ENCODE measurements at regions of chr5 and their contacts with region 1.

Region 1: DNA sequence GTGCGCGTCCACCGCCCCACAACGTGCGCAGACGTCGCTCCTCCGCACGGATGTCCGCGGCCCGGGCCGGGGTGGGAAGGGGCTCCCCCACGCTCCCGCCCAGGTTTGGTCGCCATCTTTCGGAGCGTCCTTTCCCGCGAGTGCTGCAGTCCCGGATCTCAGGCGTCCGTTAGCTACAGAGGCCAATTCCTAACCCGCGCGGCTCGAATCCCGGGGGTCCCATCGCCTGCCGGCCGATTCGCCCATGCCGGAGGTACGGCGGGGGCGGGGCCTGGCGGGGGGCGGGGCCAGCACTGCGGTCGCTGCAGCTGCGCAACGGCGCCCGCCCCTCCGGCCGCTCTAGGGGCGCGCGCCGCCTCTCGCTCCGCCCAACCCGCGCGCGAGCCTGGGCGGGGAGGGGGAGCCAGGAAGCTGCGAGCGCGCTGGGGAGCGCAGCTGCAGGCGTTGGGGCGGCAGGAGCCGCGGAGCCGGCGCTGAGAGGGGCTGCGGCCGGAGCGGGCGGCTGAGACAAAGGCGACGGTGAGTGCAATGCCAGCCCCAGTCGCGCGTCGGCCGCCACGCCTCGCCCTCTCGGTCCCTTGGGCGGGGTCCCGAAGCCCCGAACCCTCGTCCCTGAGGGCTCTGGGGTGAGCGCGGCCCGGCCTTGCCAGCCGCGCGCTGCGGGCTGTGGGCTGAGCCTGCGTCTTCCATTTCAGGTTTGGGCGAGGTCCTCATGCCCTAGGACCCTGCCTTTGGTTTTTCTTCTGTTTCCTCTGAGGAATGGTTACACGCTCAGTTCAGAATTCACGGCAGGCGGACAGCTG is at the start of gene CDC42SE2:
- DNase-seq: peak; percentile 92
- H3K4me3 Mint-ChIP-seq: peak within 1 kb of the TSS; percentile 81
- H3K27ac Mint-ChIP-seq: peak within 1 kb of the TSS; percentile 88
- H3K4me1 Mint-ChIP-seq: peaks cover 11% of the 10 kb centered on the region
- H3K27me3 Mint-ChIP-seq: no peaks in the 10 kb centered on the region
- CTCF ChIP-seq: peak; percentile 7
- total RNA-seq, gene CDC42SE2: 63.9 and 65.5 TPM in 2 replicates

Region 2: DNA sequence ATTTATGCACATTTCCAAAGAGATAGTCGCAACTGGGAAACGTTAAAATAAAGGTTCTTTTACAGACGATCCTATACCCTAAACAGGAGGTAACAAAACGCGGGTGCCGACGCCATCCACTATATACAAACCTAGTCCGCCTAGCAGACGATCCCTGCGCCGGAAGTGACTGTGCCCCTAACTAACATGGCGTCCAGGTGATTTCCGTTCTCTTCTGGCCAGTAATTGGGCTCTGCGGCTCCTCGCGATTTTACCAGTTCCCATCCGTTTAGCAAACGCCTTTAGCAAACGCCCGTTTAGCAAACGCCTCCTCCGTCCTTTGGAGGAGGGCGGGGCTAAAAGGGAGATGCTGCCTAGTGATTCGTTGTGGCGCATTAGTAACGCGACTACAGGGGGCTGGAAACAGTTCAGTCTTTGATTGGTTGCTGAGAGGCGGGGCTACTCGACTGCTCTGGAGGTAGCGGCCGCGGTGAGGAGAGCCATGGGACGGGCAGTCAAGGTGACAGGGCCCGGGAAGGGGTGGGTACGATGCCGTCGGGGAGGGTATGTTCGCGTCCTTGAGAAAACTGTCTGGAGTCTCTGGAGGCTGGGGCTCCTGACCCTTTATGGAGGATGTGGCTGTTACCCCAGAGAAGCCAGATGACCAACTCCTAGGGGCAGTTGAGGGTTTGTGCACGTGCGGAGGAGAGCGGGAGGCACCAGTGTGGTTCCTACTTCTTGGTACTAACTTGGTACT is 93.1 kb before region 1 on chr5 and contains the start of gene LYRM7:
- CTCF ChIA-PET with region 1: interaction called, 9 read pairs
- intact Hi-C with region 1: loop called (anchors 1 kb)
- DNase-seq: peak; percentile 97
- H3K4me3 Mint-ChIP-seq: peak within 1 kb of the TSS; percentile 92
- H3K27ac Mint-ChIP-seq: peak within 1 kb of the TSS; percentile 79
- H3K4me1 Mint-ChIP-seq: peaks cover 19% of the 10 kb centered on the region
- H3K27me3 Mint-ChIP-seq: no peaks in the 10 kb centered on the region
- CTCF ChIP-seq: no peak
- total RNA-seq, gene LYRM7: 12.6 and 14.6 TPM in 2 replicates

Region 3: DNA sequence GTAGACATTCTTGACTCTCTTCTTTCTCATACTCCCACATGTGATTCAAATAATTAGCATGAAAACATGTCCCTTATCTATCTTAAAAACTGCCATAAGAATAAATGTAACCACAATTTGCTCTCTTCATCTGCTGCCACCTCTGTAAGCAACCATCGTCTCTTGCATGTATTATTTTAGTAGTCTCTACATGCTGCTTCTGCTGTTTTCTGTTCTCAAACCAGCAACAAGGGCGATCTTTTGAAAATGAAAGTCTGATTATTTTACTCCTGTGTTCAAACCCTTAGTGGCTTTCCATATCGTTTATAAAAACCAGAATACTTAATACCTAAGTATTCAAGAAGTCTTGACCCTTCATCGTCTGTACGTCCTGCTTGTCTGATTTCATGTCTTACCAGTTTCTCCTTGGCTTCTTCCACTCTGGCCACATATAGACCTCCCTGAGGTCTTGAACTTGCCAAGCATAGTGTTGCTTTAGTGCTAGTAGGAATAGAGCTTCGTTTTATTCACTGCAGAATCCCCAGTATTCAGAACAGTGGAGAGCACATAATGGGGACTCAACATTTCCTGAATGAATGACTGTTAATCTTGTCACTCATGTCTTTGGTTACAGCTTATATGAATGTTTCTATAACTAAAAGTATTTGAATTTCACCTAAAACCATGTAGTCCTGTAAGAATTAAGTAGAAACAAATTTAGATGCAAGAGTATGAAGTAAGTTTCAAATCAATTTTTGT is 10.6 kb after region 1 on chr5:
- CTCF ChIA-PET with region 1: interaction called, 11 read pairs
- intact Hi-C with region 1: no loop called
- DNase-seq: no peak
- H3K4me3 Mint-ChIP-seq: no peak overlapping the region
- H3K27ac Mint-ChIP-seq: peak overlapping the region; percentile 0
- H3K4me1 Mint-ChIP-seq: peaks cover 56% of the 10 kb centered on the region
- H3K27me3 Mint-ChIP-seq: no peaks in the 10 kb centered on the region
- CTCF ChIP-seq: no peak

Region 4: DNA sequence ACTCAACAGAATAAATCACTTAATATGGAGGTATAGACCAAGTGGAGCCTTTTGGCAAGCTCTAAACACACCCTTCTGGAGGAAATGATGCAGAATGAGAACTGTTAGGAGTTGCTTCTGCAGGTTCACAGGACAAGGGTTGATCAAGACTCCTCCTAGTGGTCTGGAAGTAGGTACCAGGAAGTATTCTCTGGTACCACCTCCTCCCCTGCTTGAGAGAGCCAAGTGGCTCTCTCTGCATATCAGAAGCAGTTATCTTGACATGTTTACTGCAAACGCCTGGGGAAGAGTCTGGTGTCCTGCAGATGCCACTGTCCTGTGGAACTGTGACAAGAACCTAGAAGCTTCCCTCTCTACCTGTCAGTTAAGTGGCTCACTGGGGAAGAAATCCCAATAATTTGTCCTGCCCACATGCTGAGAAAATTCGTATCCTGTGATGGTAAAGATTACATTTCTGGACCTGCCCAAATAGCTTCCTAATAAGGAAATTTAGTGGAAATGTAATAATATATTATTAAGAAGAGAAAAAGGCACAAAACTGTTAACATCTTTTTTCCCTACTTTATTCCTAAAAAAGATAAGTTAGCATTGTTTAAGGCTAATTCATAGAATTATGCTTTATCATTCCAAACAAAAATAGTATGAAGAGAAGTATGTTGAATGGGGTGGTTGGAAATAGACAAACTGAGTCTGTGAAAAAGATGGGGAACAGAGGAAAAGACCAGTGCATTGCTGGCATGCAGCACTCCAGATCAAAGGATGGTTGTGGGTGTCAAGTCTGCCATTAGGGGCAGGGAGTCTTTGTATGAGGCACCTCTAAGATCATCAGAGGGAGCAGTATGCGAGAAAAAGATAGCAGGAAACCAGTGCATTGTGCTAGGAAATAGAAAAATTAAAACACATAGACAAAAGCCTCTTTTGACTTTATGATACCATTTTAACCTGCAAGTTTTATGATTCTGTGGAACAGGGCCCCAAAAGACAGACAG is 118.9 kb after region 1 on chr5:
- CTCF ChIA-PET with region 1: interaction called, 13 read pairs
- intact Hi-C with region 1: loop called (anchors 2 kb)
- DNase-seq: peak; percentile 63
- H3K4me3 Mint-ChIP-seq: no peak overlapping the region
- H3K27ac Mint-ChIP-seq: no peak overlapping the region
- H3K4me1 Mint-ChIP-seq: peaks cover 33% of the 10 kb centered on the region
- H3K27me3 Mint-ChIP-seq: no peaks in the 10 kb centered on the region
- CTCF ChIP-seq: peak; percentile 80

Measured in Calu3 (cell line).